Posterior vena cava (tissue), 2 donors: ENCODE measurements at regions of chr3 and their contacts with region 1.

Region 1: GRCh38 chr3:89841041-89841440 is 733.6 kb downstream of the EPHA3 start:
- DNase-seq: no peak

Region 2: GRCh38 chr3:88573472-88573871 is 1267.6 kb before region 1 on chr3:
- intact Hi-C with region 1: loop called in 1 of 2 experiments (anchors 5 kb)
- DNase-seq: no peak

Region 3: DNA sequence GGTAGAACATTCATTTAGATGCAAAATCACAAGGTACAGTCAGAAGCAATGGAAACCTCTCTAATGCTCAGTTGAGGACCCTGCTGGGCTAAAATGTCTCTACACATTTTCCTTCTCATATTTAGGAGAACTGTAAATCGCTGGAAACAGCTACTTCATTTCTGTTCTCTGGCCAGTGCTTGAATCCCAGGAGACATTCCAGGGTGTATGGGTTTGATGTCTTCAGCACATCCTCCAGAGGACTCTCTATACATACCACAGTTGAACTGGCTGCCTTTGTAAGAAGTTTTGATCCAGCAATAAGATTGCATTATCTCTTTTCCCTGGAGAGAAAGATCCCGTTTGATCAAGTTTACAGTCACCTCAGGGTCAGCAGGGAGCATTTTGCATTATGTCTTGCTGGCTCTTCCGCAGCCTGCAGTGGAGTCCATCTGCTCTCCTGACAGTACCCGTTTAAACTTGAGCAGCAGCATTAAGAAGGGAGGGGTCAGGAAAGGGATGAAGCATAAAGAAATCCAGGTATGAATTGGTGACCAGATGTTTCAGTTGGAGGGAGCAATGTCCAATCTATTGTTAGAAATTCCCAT is 57.6 kb before region 1 on chr3:
- intact Hi-C with region 1: loop called in 1 of 2 experiments (anchors 2 kb)
- DNase-seq: no peak

Region 4: GRCh38 chr3:89795506-89795905 is 45.5 kb before region 1 on chr3:
- intact Hi-C with region 1: no loop called
- DNase-seq: no peak

Region 5: GRCh38 chr3:89877230-89877629 is 36.2 kb after region 1 on chr3:
- intact Hi-C with region 1: no loop called
- DNase-seq: no peak